Tibial artery (tissue), 4 donors: ENCODE measurements at regions of chr7 and their contacts with region 1.

Region 1: DNA sequence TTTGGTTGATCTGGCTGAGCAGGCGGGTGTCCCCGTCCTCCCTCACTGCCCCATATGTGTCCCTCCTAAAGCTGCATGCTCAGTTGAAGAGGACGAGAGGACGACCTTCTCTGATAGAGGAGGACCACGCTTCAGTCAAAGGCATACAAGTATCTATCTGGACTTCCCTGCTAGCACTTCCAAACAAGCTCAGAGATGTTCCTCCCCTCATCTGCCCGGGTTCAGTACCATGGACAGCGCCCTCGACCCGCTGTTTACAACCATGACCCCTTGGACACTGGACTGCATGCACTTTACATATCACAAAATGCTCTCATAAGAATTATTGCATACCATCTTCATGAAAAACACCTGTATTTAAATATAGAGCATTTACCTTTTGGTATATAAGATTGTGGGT is 26.9 kb upstream of the TRIM56 start:
- DNase-seq: peak in 1 of 2 donors; percentile 44
- H3K4me3 ChIP-seq: no peak overlapping the region
- H3K27ac ChIP-seq: no peak overlapping the region
- H3K4me1 ChIP-seq: no peaks in the 10 kb centered on the region
- H3K27me3 ChIP-seq: peaks cover 0 to 47% of the 10 kb centered on the region in 2 donors
- CTCF ChIP-seq: no peak

Region 2: DNA sequence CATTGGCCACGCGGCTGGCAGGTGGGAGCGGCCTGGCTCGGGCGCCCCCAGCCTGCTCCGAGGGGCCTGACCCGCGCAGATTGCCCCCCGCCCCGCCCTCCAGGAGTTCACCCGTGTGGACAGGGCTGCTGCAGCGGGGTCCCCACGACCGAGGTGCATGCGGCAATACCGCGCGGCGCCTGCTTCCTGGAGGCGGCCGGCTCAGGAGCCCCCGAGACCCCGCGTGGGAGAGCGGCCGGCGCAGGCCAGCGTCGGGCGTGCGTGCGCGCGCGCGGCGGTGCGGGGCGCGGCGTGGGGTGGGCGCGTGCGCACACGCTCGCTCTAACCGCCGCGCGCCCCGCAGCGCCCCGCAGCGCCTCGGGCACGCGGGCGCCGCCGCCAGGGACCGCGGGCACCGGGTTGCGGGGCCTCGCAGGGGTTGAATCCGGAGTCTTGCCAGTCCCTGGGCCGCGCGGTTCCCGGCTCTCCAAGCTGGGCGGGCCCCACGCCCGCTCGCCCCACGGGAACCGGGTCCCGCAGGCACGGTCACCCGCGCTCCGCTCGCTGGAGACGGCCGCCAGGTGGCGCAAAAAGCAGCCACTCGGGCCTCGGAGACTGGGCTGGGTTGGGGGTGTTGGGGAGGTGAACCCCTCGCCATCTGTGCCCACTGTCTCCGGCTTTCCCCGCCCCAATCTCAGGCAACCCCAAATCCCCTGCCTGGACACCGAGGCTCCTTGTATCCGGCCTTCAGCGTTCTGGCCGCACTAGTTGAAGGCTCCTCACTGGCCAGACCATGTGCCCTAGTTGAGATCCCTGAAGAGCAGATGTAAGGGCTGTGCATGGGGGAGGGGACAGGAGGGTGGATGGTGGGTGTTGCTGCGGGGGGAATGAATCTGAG is 161.4 kb before region 1 on chr7:
- intact Hi-C with region 1: loop called (anchors 2 kb)
- DNase-seq: no peak
- H3K4me3 ChIP-seq: peak overlapping the region; percentile 26 to 40
- H3K27ac ChIP-seq: no peak overlapping the region
- H3K4me1 ChIP-seq: peaks cover 0 to 33% (median 30%) of the 10 kb centered on the region in 4 donors
- H3K27me3 ChIP-seq: peaks cover 0 to 81% of the 10 kb centered on the region in 2 donors
- CTCF ChIP-seq: peak; percentile 69 to 72

Region 3: GRCh38 chr7:101012931-101013669 is 45.3 kb before region 1 on chr7:
- intact Hi-C with region 1: no loop called
- DNase-seq: no peak
- H3K4me3 ChIP-seq: no peak overlapping the region
- H3K27ac ChIP-seq: no peak overlapping the region
- H3K4me1 ChIP-seq: peaks cover 0 to 13% (median 12%) of the 10 kb centered on the region in 4 donors
- H3K27me3 ChIP-seq: peaks cover 0 to 19% of the 10 kb centered on the region in 2 donors
- CTCF ChIP-seq: no peak

Region 4: DNA sequence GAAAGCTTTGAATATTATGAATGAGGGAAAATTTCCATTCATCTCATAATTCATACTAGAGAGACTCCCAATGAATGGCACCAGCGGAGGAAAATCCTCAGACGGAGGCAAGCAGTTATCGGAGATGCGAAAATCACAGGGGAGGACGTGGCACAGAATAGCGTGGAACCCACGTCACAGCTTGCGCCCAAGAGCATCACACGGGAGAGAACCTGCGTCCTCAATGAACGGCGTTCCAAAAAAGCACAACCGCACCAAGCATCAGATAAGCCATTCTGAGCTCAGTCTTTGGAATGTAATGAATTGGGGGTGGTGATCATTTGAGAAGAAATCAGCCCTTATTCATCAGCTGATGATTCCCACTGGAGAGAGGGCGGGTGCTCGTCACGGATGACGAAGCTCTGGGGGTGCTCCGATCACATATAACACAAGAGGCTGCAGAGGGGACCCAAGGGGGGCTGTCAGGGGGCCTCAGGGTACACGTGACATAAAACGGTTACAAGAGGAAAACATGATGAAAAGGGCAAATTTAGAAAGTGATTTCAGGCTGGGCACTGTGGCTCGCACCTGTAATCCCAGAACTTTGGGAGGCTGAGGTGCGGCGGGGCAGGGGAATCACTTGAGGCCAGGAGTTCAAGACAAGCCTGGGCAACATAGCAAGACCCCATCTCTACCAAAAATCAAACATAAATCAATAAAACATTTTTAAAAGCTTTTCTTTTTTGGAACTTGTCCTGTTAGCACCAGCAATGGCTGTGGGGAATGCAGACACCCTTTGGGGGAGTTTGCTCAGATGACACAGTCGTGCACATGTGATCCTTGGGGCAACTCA is 220.3 kb after region 1 on chr7:
- intact Hi-C with region 1: no loop called
- DNase-seq: no peak
- H3K4me3 ChIP-seq: no peak overlapping the region
- H3K27ac ChIP-seq: no peak overlapping the region
- H3K4me1 ChIP-seq: peaks cover 0 to 4% (median 2%) of the 10 kb centered on the region in 4 donors
- H3K27me3 ChIP-seq: peaks cover 0 to 56% of the 10 kb centered on the region in 2 donors
- CTCF ChIP-seq: no peak